ENCODE measurements at regions of chr2 and their contacts with region 1.

Region 1: DNA sequence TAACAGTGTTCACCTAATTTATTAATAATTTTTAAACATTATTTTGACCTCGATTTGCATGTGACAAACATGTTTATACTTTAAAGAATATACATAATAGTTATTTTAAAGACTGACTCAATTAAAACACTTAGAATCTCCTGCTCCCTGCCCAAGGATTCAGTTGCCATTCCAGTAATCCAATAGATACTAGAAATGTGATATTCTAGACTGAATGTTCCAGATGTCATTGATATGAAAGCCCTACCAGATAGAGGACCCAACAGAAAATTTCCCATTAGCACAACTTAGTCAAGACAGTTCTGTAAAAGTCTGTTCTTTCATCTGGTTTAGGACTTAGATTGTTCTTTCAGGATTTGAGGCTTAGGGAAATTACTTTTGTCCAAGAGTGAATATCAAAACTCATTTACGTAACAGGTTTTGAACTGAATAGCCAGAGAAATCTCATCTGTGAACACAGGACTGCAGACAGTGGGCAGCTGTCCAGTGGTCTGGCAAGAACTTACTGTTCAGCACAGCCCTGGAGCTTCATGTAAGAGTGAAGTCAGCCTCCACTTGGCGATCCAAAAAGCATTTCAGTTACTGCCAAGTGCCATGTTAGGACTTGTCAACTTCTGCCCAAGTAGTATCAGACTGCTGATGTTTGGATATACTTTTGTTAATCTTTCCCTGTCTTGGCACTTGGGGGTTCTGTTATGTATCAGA is 77.5 kb downstream of the OSBPL6 start:
- DNase-seq: peak; percentile 85 to 94
- ATAC-seq: peak; percentile 89 to 93 (median 93)
- H3K4me3 ChIP-seq: peak overlapping the region; percentile 30
- H3K27ac ChIP-seq: peak overlapping the region; percentile 88
- H3K4me1 ChIP-seq: peaks cover 67% of the 10 kb centered on the region
- H3K27me3 ChIP-seq: no peaks in the 10 kb centered on the region
- CTCF ChIP-seq: no peak

Region 2: DNA sequence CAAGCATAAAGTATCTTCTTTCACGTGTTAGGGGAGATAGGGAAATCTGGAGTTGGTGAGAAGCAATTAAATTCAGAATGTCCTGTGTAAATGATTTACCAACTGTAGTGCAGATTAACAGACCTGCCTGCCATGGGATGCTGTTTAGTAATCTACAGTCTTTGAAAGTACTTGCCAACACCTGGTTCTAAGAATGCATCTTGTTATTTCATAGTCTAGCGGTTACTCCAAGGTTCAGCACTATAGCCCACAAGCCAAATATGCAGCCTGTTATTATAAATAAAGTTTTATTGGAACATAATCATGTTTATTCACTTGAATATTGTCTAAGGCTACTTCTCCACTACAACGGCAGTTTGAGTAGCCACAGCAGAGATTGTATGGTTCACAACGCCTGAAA is 23.3 kb after region 1 on chr2:
- intact Hi-C with region 1: loop called in 1 of 2 experiments (anchors 2 kb)
- DNase-seq: no peak
- ATAC-seq: no peak
- H3K4me3 ChIP-seq: no peak overlapping the region
- H3K27ac ChIP-seq: peak overlapping the region; percentile 81
- H3K4me1 ChIP-seq: peaks cover 45% of the 10 kb centered on the region
- H3K27me3 ChIP-seq: no peaks in the 10 kb centered on the region
- CTCF ChIP-seq: no peak